ENCODE measurements at regions of chr14 and their contacts with region 1.

Region 1: DNA sequence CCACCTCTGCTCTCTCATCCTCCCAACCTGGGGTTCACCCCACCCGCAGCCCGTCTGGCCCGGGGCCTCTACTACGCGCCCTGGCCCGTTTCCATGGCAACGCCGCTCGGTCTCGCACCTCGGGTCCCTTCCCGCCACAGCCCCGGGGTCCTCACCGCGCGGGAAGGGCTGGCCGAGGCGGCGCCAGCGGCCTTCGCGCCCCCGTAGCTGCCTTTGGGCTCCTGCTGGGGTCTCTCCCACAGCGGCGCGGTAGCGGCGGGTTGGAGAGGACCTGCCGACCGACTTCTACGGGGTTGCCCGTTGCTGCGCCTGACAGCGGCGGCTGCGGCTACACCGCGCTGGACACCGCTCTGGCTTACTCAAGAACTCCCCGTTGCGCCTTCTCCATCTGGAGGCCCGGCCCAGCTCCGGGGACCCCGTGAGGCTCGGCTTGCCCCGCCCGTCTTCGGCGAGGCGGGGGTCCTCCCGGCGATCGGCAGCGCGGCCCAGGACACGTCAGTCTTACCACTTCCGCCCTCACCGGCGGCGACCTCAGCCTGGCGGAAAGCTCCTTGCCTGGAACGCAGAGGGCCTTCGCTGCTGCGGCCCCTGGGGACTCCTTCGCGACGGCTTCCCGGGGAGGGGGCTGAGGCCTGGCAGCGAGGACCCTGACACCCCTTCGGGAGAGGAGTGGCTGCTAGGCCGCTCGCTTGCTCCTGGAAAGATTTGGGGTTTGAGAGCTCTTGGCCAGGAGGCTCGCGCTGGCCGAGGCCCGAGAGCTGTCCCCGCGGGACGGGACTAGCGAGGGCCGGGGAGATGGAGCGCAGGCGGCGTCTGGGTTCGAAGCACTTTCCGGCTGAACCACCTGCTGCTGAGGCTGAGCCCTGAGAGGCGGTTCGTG is at the start of gene TM9SF1:
- DNase-seq: peak; percentile 81 to 95 (median 90)
- ATAC-seq: peak; percentile 87 to 88
- H3K4me3 Mint-ChIP-seq: peak within 1 kb of the TSS; percentile 84 to 98 (median 93)
- H3K27ac Mint-ChIP-seq: peak within 1 kb of the TSS; percentile 93 to 99 (median 98)
- H3K4me1 Mint-ChIP-seq: peaks cover 24 to 64% (median 62%) of the 10 kb centered on the region in 4 donors
- H3K27me3 Mint-ChIP-seq: no peaks in the 10 kb centered on the region
- polyA plus RNA-seq, gene TM9SF1: 23.1 to 29.8 (median 29.1) TPM

Region 2: DNA sequence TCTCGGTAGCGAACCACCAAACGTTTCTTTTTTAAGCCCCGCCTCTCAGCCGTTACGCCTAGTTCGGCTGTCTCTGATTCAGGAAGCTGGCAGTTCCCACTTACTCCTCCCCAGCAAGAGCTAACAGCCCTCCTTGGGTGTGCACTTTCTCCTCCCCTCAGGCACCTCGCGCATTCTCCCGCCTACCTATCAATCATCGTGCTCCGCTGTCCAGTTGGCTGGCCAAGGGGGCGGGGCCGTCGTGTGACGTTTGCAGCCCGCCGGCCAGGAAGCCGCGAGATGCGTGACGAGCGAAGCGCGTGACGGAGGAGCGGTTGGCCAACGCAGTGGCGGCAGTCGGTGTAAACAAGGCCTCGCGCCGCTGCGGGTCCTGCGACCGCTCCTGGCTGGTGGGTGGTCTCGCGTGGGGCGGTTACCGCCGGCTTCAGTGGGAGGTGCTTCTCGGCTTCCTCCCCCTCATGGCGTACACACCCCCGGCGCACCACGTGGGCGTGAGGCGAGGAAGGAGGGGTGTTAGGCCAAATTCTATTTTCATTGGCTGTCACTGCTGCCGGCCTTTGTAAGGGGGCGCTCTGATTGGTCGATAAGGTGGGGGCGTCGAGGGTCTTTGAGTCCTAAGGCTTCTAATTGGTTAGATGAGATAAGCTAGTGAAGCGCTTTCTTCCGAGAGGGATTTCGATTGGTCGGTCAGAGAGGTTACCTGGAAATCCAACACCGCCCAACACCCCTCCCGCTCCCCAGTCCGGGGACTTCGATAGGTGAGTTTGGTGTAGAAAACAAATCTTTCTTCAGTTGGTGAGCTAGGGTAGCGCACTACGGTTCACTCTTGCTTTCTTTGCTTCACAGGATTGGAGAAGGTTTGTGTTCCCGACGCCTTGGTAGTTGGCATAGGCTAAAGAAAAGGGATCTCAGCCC is 80.6 kb before region 1 on chr14 and contains the starts of genes DCAF11 and NRL:
- POLR2A ChIA-PET with region 1: interaction called, 18 read pairs
- DNase-seq: peak; percentile 96 to 100 (median 99)
- ATAC-seq: peak; percentile 84
- H3K4me3 Mint-ChIP-seq: peak within 1 kb of the TSS; percentile 89 to 99 (median 98)
- H3K27ac Mint-ChIP-seq: peak within 1 kb of the TSS; percentile 95 to 100 (median 99)
- H3K4me1 Mint-ChIP-seq: peaks cover 22 to 39% (median 37%) of the 10 kb centered on the region in 4 donors
- H3K27me3 Mint-ChIP-seq: peaks cover 0 to 4% (median 0%) of the 10 kb centered on the region in 5 donors
- polyA plus RNA-seq, gene DCAF11: 68.0 to 83.8 (median 71.9) TPM
- polyA plus RNA-seq, gene NRL: 3.0 to 3.5 (median 3.1) TPM

Region 3: GRCh38 chr14:24135834-24136542 is 59.4 kb before region 1 on chr14 and contains the start of gene PSME1:
- POLR2A ChIA-PET with region 1: interaction called, 16 read pairs
- DNase-seq: peak; percentile 88 to 96 (median 94)
- ATAC-seq: peak; percentile 88 to 94
- H3K4me3 Mint-ChIP-seq: peak within 1 kb of the TSS; percentile 87 to 98 (median 93)
- H3K27ac Mint-ChIP-seq: peak within 1 kb of the TSS; percentile 86 to 97 (median 94)
- H3K4me1 Mint-ChIP-seq: peaks cover 34 to 69% (median 66%) of the 10 kb centered on the region in 4 donors
- H3K27me3 Mint-ChIP-seq: no peaks in the 10 kb centered on the region
- polyA plus RNA-seq, gene PSME1: 681 to 767 (median 753) TPM

Region 4: GRCh38 chr14:24141097-24141880 is 54.1 kb before region 1 on chr14 and contains the start of gene EMC9:
- POLR2A ChIA-PET with region 1: interaction called, 16 read pairs
- DNase-seq: peak; percentile 95 to 100 (median 99)
- ATAC-seq: peak; percentile 90 to 93
- H3K4me3 Mint-ChIP-seq: peak within 1 kb of the TSS; percentile 88 to 96 (median 91)
- H3K27ac Mint-ChIP-seq: peak within 1 kb of the TSS; percentile 83 to 97 (median 94)
- H3K4me1 Mint-ChIP-seq: peaks cover 31 to 88% (median 79%) of the 10 kb centered on the region in 4 donors
- H3K27me3 Mint-ChIP-seq: no peaks in the 10 kb centered on the region
- polyA plus RNA-seq, gene EMC9: 7.5 to 9.4 (median 8.4) TPM

Region 5: GRCh38 chr14:24146978-24147760 is 48.3 kb before region 1 on chr14 and contains the start of gene RNF31:
- POLR2A ChIA-PET with region 1: interaction called, 13 read pairs
- DNase-seq: peak; percentile 91 to 98 (median 96)
- ATAC-seq: peak; percentile 87 to 90
- H3K4me3 Mint-ChIP-seq: peak within 1 kb of the TSS; percentile 94 to 100 (median 98)
- H3K27ac Mint-ChIP-seq: peak within 1 kb of the TSS; percentile 91 to 99 (median 96)
- H3K4me1 Mint-ChIP-seq: peaks cover 22 to 71% (median 69%) of the 10 kb centered on the region in 4 donors
- H3K27me3 Mint-ChIP-seq: no peaks in the 10 kb centered on the region
- polyA plus RNA-seq, gene RNF31: 34.1 to 45.3 (median 37.6) TPM

Region 6: DNA sequence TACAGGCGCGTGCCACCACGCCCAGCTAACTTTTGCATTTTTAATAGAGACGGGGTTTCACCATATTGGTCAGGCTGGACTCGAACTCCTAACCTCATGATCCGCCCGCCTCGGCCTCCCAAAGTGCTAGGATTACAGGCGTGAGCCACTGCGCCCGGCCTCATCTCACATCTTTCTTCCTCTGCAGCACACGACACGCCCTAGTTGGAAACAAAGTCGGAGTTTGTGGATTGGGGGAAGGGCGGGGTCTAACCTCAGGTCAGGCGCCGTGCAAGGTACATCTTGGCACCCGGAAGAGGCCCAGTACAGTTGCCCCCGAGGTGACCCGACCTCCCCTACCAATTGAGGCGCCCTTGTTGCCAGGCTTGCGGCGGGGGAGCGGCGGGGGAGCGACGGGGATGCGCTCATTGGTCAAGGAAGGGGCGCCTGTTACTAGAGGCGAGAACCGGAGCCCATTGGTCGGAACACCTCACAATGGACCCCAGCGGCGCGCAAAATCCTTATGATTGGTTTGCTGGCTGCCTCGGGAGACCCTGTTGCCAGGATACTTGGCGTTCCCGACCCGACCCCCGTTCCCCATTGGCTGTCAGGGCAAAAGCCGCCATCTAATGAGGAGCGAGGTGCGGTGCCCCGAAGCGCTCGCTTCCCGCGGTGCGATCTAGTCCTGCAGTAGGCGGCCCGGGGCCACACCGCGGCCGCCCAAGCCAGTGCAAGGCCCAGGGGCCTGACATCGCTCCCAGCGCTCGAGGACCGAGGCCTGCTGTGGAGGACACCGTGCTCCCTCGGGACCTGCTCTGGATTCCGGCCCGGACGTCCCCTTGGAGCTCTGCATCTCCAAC is 23.8 kb before region 1 on chr14 and contains the start of gene REC8:
- POLR2A ChIA-PET with region 1: interaction called, 12 read pairs
- DNase-seq: peak; percentile 61 to 92 (median 84)
- ATAC-seq: peak; percentile 91
- H3K4me3 Mint-ChIP-seq: peak within 1 kb of the TSS; percentile 86 to 97 (median 92)
- H3K27ac Mint-ChIP-seq: peak within 1 kb of the TSS; percentile 77 to 94 (median 92)
- H3K4me1 Mint-ChIP-seq: peaks cover 18 to 42% (median 38%) of the 10 kb centered on the region in 4 donors
- H3K27me3 Mint-ChIP-seq: no peaks in the 10 kb centered on the region
- polyA plus RNA-seq, gene REC8: 11.1 to 11.6 (median 11.2) TPM

Region 7: DNA sequence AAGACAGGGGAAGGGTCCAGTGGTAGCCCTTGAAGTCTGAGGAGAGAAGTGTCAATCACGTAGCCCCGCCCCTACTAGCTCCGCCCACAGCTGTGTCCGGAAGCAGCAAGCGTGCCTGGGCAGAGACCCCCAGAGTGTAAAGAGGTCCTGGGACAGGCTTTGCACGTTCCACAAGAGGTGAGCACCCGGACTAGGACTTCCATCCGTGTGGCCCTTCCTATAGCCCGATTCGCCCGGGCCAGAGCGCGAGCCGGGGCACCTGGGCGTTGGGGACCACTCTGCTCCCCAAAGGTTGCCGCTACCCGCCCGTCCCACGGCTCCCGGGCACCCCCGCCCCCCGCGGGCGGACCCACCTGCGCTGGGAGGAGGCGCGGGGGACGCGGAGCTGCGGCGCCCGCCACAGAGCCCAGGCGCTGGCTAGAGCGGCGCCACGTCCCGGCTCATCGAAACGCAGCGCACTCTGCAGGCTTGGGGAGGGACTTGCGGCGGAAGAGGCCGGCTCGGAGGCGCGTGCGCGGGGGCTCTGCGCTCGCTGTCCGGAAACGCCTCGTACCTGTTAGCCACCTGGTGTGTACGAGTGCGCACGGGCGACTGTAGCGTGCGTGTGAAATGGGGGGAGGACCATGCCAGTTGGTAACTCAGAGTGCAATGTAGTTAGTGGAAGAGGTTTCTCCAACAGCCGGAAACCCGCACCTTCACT is 75.9 kb after region 1 on chr14 and contains the start of gene RABGGTA:
- POLR2A ChIA-PET with region 1: interaction called, 11 read pairs
- DNase-seq: peak; percentile 87 to 98 (median 94)
- ATAC-seq: peak; percentile 86 to 91
- H3K4me3 Mint-ChIP-seq: peak within 1 kb of the TSS; percentile 78 to 94 (median 92)
- H3K27ac Mint-ChIP-seq: peak within 1 kb of the TSS; percentile 92 to 100 (median 99)
- H3K4me1 Mint-ChIP-seq: peaks cover 31 to 45% (median 41%) of the 10 kb centered on the region in 4 donors
- H3K27me3 Mint-ChIP-seq: no peaks in the 10 kb centered on the region
- polyA plus RNA-seq, gene RABGGTA: 12.7 to 22.1 (median 20.4) TPM